Dendritic cell treated with granulocyte-macrophage colony-stimulating factor and Interleukin-4, amounts not matched to agents 40 ng/mL and 50 ng/mL, for 4 days (primary cell): ENCODE measurements at regions of chr15 and their contacts with region 1.

Region 1: DNA sequence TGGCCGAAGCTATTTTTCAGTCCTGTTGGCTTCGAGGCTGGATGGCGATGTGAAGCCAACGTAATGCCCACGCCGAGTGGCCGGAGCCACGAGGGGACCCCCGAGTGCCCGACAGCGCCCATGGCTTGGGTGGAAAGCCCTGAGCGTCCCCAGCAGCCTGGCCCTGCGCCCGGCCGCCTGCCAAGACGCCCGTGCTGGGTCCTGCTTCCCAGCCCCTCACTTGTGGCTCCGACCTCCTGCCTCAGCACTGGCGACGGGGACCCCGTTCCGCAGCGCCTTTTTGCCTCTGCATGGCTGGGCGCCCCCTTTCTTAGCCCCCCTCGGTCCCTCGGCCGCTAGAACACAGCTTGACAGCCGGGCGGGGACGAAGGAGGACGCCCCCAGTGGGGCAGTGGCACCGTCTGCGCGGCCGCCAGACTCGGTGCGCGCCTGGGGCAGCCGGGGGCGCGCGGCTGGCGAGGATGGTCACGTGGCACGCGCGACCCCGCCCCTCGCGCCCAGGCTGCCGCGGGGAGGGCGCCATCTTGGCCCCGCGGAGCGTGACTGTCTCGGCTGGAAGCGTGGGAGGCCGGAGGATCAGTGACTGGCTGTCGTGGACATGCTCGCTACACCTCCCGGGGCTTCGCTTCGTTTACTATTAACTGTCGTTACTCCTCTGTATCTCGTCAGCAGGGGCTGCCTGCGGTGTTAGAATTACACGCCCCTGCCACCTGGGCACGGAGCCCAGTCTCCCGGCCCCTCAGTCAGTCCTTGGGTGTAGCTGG is 626 bp upstream of the GPR176 start:
- H3K4me3 Mint-ChIP-seq: peak overlapping the region; percentile 86
- H3K27ac Mint-ChIP-seq: peak overlapping the region; percentile 83
- H3K4me1 Mint-ChIP-seq: peaks cover 19% of the 10 kb centered on the region
- H3K27me3 Mint-ChIP-seq: peaks cover 51% of the 10 kb centered on the region

Region 2: GRCh38 chr15:39934397-39935071 is 13.8 kb after region 1 on chr15:
- intact Hi-C with region 1: loop called (anchors 2 kb)
- H3K4me3 Mint-ChIP-seq: peak overlapping the region; percentile 83
- H3K27ac Mint-ChIP-seq: peak overlapping the region; percentile 90
- H3K4me1 Mint-ChIP-seq: peaks cover 55% of the 10 kb centered on the region
- H3K27me3 Mint-ChIP-seq: peaks cover 2% of the 10 kb centered on the region

Region 3: GRCh38 chr15:39961051-39961450 is 40.4 kb after region 1 on chr15:
- intact Hi-C with region 1: loop called (anchors 5 kb)
- H3K4me3 Mint-ChIP-seq: no peak overlapping the region
- H3K27ac Mint-ChIP-seq: no peak overlapping the region
- H3K4me1 Mint-ChIP-seq: no peaks in the 10 kb centered on the region
- H3K27me3 Mint-ChIP-seq: no peaks in the 10 kb centered on the region